Stomach (tissue), 19 donors: ENCODE measurements at regions of chr13 and their contacts with region 1.

Region 1: GRCh38 chr13:77492982-77493381 is 42.5 kb upstream of the SCEL start:
- DNase-seq: peak in 1 of 2 donors; percentile 64
- H3K4me3 ChIP-seq: no peak overlapping the region
- H3K27ac ChIP-seq: no peak overlapping the region
- H3K4me1 ChIP-seq: no peaks in the 10 kb centered on the region
- H3K27me3 ChIP-seq: no peaks in the 10 kb centered on the region
- CTCF ChIP-seq: peak in 3 of 7 experiments; percentile 7 to 40 (median 23)
- EP300 ChIP-seq: no peak
- POLR2A ChIP-seq: no peak

Region 2: DNA sequence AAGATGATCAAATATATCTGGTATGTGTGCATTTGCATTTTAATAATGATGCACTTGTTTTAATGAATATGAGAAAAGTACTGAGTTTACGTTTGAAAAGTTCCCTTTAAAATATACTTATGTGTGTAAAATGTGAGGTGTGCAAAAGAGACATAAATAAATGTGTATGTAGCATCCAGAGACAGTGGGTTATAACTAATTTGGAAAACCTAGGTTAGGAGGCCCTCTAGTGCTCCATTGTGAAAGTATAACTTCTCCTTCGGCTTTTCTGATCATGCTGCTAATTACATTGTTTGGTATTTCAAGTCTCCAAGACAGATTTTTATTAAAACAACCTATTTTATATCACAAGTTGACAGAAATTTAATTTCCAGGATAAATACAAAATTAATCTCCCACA is 72.7 kb after region 1 on chr13:
- intact Hi-C with region 1: loop called (anchors 10 kb)
- DNase-seq: peak in 1 of 2 donors; percentile 66
- H3K4me3 ChIP-seq: no peak overlapping the region
- H3K27ac ChIP-seq: no peak overlapping the region
- H3K4me1 ChIP-seq: no peaks in the 10 kb centered on the region
- H3K27me3 ChIP-seq: no peaks in the 10 kb centered on the region
- CTCF ChIP-seq: no peak
- EP300 ChIP-seq: no peak
- POLR2A ChIP-seq: no peak